ENCODE measurements at regions of chr2 and their contacts with region 1.

Region 1: GRCh38 chr2:102442967-102443828 is 20.2 kb downstream of the IL18RAP start:
- DNase-seq: peak; percentile 63
- H3K4me3 Mint-ChIP-seq: peak overlapping the region; percentile 16
- H3K27ac Mint-ChIP-seq: peak overlapping the region; percentile 34
- H3K4me1 Mint-ChIP-seq: peaks cover 10% of the 10 kb centered on the region
- H3K27me3 Mint-ChIP-seq: no peaks in the 10 kb centered on the region

Region 2: DNA sequence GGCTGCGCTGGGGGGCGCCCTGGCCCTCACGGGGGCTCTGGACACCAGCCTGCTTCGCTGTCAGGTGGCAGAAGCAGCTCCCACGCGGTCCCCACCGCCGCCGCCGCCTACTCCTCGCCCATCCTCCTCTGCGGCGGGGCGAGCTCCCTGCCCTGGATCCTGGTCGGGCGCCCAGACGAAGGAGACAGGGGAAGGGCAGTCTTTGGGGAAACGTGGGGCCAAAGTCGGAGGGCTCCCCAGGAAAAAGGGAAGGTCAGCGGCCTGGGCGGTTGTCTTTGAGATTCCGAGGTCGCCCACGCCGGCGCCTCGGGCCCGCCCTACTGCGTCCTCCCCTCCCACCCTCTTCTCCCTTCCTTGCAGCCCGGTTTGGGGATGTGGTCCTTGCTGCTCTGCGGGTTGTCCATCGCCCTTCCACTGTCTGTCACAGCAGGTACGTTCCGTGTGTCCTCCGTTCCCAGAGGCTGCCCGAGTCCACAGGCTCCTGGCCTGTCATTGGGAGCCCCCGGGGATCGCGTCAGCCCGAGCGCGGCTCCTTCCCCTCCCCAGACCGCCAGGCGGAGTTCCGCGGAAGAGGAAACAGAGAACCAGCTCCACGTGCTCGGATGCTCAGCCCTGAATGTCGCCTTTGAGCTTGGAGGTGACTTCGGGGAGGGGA is 255.6 kb before region 1 on chr2:
- CTCF ChIA-PET with region 1: no interaction called
- POLR2A ChIA-PET with region 1: no interaction called
- intact Hi-C with region 1: loop called (anchors 5 kb)
- DNase-seq: peak; percentile 72
- H3K4me3 Mint-ChIP-seq: peak overlapping the region; percentile 81
- H3K27ac Mint-ChIP-seq: peak overlapping the region; percentile 83
- H3K4me1 Mint-ChIP-seq: peaks cover 19% of the 10 kb centered on the region
- H3K27me3 Mint-ChIP-seq: peaks cover 13% of the 10 kb centered on the region

Region 3: DNA sequence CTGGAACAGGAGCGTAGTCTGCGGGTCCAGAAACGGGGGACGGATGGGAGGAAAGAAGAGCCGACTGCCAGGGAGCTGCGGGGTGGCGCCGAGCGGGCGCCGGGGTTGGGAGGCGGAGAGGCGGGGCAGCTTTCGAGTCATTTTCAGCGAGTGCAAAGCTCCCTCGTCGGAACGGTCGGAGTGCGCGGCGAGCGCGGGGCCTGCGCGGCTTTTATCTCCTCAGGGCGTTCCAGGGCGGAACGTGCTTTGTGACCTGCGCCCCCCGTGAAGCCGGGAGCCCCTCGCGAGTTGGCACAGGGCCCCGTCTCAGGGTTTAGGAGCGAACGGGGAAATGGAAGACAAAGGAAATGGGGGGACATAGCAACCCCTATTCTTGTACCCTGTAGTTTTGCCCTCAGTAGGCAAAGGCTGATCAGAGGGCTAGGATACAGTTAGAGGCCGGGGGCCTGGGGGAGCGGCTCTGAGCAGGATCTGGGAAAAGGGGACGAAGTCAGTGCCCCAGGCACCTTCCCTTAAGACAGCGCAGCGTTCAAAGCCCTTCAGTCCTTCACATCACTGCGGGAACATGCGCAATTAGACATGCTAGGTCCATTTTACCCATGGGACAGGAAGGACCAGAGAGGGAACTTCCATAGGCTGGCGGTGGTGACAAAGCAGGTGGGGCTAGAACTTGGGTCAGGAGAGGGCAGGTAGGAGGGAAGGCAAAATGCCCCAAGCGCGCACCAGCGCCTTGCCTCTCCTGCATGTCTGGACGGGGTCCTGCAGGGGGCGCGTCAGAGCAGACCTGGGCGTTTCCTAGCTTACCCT is 192.0 kb before region 1 on chr2:
- CTCF ChIA-PET with region 1: interaction called, 43 read pairs
- POLR2A ChIA-PET with region 1: no interaction called
- intact Hi-C with region 1: loop called (anchors 1 kb)
- DNase-seq: peak; percentile 83
- H3K4me3 Mint-ChIP-seq: peak overlapping the region; percentile 66
- H3K27ac Mint-ChIP-seq: peak overlapping the region; percentile 64
- H3K4me1 Mint-ChIP-seq: peaks cover 36% of the 10 kb centered on the region
- H3K27me3 Mint-ChIP-seq: no peaks in the 10 kb centered on the region

Region 4: DNA sequence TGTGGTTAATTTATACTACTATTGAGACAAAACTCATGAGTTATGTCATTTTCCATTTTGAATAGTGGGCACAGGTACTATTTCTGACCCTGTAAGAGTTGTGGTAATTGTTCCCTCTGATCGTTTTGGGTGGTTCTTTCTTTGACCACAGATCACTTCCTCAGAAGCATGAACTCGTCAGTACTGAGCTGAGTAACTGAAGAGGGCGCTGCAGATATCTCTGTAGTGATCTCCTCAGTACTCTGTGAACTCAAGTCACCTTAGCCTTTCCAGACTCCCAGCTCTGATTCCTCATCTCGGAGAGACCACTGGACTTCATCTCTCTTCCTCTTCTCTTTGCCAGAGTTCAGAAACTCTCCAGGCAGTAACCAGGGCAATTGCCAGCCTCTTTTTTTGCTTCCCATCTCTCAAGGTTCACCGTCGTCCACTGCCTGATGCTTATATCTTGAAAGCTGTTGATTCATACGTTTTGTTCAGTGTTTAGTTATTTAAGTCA is 141.3 kb before region 1 on chr2:
- CTCF ChIA-PET with region 1: interaction called, 24 read pairs
- POLR2A ChIA-PET with region 1: no interaction called
- intact Hi-C with region 1: loop called (anchors 5 kb)
- DNase-seq: peak; percentile 65
- H3K4me3 Mint-ChIP-seq: peak overlapping the region; percentile 4
- H3K27ac Mint-ChIP-seq: peak overlapping the region; percentile 55
- H3K4me1 Mint-ChIP-seq: peaks cover 45% of the 10 kb centered on the region
- H3K27me3 Mint-ChIP-seq: peaks cover 4% of the 10 kb centered on the region

Region 5: GRCh38 chr2:102355526-102356380 is 87.4 kb before region 1 on chr2 and contains the start of gene IL18R1:
- CTCF ChIA-PET with region 1: interaction called, 74 read pairs
- POLR2A ChIA-PET with region 1: interaction called, 3 read pairs
- intact Hi-C with region 1: loop called (anchors 1 kb)
- DNase-seq: peak; percentile 81
- H3K4me3 Mint-ChIP-seq: peak within 1 kb of the TSS; percentile 97
- H3K27ac Mint-ChIP-seq: peak within 1 kb of the TSS; percentile 89
- H3K4me1 Mint-ChIP-seq: peaks cover 45% of the 10 kb centered on the region
- H3K27me3 Mint-ChIP-seq: no peaks in the 10 kb centered on the region
- total RNA-seq, gene IL18R1: 25.5 to 26.6 TPM

Region 6: DNA sequence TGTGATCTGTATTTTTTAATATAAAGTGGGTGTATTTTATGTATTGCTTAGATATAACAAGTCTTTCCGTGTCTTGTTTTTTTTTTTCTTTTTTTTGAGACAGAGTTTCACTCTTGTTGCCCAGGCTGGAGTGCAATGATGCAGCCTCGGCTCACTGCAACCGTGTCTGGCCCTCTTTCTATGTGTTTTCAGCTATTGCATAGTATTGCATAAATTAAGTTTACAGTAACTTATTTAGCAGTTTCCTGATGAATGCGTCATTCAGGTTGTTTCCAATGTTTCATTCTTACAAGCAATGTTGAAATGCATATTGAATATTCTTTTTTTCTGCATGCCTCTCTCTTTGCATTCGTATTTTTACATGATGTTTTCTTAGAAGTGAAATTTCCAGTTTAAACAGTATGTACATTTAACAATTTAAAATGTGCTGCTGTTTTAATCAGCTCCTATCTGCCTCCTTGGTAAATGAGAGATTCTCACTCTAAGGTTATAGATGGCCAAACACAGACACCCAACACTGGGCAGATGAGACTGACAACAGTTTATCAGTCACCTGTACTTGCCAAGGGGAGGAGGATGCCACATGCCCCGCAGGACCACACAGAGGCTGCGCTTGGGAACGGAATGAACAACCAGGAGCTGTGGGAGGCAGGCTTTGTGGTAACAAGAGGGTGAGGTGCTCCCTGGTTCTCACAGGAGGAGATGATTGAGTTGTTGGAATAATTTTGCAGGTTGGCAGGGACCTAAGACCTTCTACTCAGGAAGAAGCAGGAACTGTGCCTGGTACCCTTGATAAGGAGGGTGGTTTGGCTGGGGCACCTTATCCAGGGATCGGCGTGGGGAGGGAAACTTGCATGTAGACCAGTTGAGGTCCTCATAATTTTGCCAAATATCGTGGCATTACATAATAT is 37.3 kb after region 1 on chr2:
- CTCF ChIA-PET with region 1: no interaction called
- POLR2A ChIA-PET with region 1: no interaction called
- intact Hi-C with region 1: no loop called
- DNase-seq: no peak
- H3K4me3 Mint-ChIP-seq: no peak overlapping the region
- H3K27ac Mint-ChIP-seq: no peak overlapping the region
- H3K4me1 Mint-ChIP-seq: peaks cover 10% of the 10 kb centered on the region
- H3K27me3 Mint-ChIP-seq: peaks cover 13% of the 10 kb centered on the region

Region 7: DNA sequence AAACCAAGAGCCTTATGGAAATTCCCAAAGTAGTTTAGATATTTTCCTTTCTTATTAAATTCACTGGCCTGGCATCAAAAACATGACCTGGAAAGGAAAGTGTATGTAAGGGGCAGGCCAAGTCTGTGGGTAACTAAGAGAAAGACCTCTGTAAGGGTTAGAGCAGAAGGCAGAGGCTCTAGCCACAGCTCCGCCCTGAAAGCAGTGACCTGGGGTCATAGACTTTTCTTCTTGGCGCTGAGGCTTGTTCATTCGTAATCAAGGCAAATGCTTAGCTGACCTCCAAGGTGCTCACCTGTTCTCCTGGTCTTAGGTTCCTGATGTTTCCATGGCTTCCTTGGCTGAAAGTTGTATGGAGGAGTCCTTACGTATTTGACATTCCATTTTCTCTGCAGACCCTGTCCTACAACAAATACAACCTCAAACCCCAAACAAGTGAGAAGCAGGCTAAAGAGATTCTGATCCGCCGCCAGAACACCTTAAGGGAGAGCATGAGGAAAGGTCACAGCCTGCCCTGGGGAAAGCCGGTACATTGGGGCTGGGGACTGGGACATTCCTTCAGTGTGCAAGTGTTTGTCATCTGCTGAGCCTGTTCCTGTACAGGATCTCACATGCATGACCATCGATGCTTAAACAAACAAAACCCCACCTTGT is 81.6 kb after region 1 on chr2:
- CTCF ChIA-PET with region 1: no interaction called
- POLR2A ChIA-PET with region 1: no interaction called
- intact Hi-C with region 1: no loop called
- DNase-seq: no peak
- H3K4me3 Mint-ChIP-seq: no peak overlapping the region
- H3K27ac Mint-ChIP-seq: no peak overlapping the region
- H3K4me1 Mint-ChIP-seq: no peaks in the 10 kb centered on the region
- H3K27me3 Mint-ChIP-seq: peaks cover 2% of the 10 kb centered on the region